ENCODE measurements at regions of chr11 and their contacts with region 1.

Region 1: GRCh38 chr11:46537537-46538295 is 56.1 kb downstream of the AMBRA1 start:
- DNase-seq: peak; percentile 76
- H3K4me3 ChIP-seq: no peak overlapping the region
- H3K27ac ChIP-seq: peak overlapping the region; percentile 19
- H3K4me1 ChIP-seq: peaks cover 5% of the 10 kb centered on the region
- H3K27me3 ChIP-seq: no peaks in the 10 kb centered on the region
- CTCF ChIP-seq: peak; percentile 98 to 99

Region 2: DNA sequence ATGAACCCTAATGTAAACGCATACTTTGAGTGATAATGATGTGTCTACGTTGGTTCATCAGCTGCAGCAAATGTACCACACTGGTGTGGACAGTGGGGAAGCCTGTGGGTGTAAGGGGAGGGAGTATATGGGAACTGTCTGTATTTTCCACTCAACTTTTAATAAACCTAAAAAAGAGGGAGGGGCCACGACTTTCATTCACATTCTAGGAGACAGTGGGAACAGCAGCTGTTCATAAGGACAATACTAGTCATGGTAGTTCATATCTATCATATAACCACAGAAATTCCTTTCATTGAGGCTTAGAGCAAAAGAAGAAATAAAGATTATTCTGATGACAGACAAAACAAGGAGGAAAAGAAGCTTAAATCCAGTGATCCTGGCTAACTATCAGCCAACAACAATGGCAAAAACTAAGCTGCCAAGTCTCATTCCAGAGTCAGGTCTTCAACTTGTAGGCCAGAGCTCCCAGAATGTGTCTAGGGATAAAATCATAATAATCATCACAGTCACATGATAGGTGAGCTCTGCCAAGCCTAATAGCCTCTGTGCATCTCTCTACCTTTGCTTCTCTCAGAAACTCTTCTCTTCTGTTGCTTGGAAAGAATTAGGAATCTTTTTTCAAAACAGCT is 86.8 kb before region 1 on chr11:
- CTCF ChIA-PET with region 1: no interaction called
- dilution Hi-C with region 1: no loop called
- in situ Hi-C with region 1: no loop called
- intact Hi-C with region 1: no loop called
- DNase-seq: no peak
- H3K4me3 ChIP-seq: no peak overlapping the region
- H3K27ac ChIP-seq: no peak overlapping the region
- H3K4me1 ChIP-seq: no peaks in the 10 kb centered on the region
- H3K27me3 ChIP-seq: no peaks in the 10 kb centered on the region
- CTCF ChIP-seq: no peak

Region 3: GRCh38 chr11:46489661-46490560 is 47.8 kb before region 1 on chr11:
- CTCF ChIA-PET with region 1: interaction called, 3 read pairs
- dilution Hi-C with region 1: no loop called
- in situ Hi-C with region 1: no loop called
- intact Hi-C with region 1: loop called (anchors 1 kb)
- DNase-seq: peak; percentile 32
- H3K4me3 ChIP-seq: no peak overlapping the region
- H3K27ac ChIP-seq: no peak overlapping the region
- H3K4me1 ChIP-seq: no peaks in the 10 kb centered on the region
- H3K27me3 ChIP-seq: no peaks in the 10 kb centered on the region
- CTCF ChIP-seq: peak; percentile 61 to 62

Region 4: DNA sequence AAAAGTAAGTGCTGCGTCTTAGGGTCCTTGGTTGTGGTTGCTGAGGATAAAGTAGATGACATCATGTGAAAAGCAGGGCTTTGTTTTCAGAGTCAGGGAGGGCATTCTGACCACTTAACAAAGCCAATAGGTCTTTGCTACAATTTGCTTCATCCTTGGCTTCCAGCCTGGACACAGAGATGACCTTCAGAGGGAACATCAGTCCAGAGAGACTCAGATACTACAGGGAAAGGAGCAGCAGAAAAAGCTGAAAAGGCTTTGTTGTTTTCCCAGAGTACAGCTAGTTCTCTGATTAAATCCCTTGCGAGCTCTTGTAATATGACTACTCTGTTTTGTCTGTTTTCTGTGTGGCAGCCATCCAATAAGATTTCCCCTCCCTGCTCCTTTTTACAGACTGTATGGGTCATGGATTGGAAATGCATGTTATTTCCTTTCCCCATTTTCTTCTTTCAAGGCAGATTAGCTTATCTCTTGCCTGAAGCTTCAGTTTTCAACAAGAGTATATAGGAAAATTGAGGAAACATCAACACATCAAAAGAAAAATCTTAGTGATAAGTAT is 111.5 kb after region 1 on chr11:
- CTCF ChIA-PET with region 1: no interaction called
- dilution Hi-C with region 1: no loop called
- in situ Hi-C with region 1: no loop called
- intact Hi-C with region 1: no loop called
- DNase-seq: peak; percentile 65
- H3K4me3 ChIP-seq: no peak overlapping the region
- H3K27ac ChIP-seq: no peak overlapping the region
- H3K4me1 ChIP-seq: no peaks in the 10 kb centered on the region
- H3K27me3 ChIP-seq: no peaks in the 10 kb centered on the region
- CTCF ChIP-seq: no peak